Right ventricle myocardium superior (tissue), 1 donor: ENCODE measurements at regions of chr21 and their contacts with region 1.

Region 1: DNA sequence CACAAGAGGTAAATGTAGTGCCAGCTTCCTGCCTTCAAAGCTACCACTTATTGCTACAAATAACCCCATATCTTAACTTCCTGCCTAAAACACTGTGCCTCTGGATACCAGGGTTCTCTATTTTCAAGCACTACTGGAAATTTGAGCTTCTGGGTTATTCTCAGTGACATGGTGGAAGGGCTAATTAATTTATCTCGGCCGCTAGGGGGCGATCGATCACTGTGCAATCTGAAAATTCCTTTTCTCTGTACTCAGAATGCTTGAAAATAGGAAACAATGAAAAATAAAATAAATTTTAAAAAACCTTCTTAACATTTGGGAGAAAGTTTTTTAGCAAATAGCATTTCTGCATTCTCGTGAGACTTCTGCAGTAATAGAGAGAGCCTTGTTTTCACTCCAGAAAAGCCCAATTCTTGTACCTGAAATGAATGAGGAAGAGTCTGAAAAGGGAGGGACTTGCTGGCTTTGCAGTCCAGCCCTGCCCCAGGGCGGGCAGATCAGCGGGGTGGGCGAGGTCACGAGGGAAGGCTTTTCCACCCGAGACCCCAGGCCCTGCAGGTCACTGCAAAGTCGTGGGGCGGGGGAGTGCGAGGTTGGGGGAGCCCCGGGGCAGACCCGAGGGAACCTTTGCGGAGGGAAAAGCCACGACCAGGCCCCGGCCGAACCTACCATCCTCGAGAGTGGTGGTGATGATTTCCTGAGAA is 276.7 kb downstream of the PCP4 start:
- DNase-seq: no peak
- ATAC-seq: peak; percentile 74

Region 2: DNA sequence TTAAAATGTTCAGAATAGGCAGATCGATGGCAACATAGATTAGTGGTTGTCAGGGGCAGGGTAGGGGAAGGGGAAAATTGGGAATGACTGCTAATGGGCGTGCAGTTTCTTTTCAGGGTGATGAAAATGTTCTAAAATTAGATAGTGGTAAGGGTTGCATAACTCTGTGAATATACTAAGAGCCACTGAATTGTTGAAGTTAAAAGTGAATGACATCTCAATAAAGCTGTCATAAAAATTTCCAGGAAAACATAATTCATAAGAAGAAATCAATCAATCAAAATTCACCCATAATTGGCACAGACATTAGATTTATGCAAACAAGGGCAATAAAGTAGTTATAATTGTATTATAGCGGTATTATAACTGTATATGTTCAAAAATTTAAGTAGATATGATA is 48.5 kb before region 1 on chr21:
- intact Hi-C with region 1: no loop called
- DNase-seq: no peak
- ATAC-seq: no peak

Region 3: GRCh38 chr21:40385892-40386599 is 242.1 kb after region 1 on chr21:
- intact Hi-C with region 1: loop called (anchors 5 kb)
- DNase-seq: peak; percentile 58
- ATAC-seq: peak; percentile 65

Region 4: DNA sequence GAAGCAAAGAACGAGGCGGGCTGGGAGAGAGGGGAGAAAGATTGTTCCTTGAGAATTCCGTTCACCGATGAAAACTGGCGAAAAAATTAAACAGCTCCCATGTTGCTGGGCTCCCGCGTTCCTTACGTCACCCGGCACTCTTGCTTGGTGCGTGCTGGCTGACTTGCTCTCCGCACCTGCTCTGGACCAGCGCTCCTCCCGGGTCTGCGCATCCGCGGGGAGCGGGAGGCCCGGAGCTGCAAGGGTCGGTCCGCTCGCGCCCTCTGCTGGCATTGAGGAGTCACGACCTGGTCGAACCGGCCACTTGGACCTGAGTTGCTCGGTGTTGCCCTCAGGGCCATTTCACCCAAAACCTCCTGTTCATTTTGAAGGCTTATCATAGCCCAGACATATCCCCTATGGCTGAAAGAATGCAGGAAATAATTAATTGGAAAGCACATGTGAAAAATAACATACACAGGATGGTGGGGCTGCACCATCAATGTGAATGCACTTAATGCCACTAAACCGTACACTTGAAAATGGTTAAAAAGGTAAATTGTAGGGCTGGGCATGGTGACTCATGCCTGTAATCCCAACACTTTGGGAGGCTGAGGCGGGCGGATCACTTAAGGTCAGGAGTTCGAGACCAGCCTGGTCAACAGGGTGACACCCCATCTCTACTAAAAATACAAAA is 925.1 kb after region 1 on chr21:
- intact Hi-C with region 1: loop called (anchors 10 kb)
- DNase-seq: peak; percentile 88
- ATAC-seq: peak; percentile 92